ENCODE measurements at regions of chr4 and their contacts with region 1.

Region 1: DNA sequence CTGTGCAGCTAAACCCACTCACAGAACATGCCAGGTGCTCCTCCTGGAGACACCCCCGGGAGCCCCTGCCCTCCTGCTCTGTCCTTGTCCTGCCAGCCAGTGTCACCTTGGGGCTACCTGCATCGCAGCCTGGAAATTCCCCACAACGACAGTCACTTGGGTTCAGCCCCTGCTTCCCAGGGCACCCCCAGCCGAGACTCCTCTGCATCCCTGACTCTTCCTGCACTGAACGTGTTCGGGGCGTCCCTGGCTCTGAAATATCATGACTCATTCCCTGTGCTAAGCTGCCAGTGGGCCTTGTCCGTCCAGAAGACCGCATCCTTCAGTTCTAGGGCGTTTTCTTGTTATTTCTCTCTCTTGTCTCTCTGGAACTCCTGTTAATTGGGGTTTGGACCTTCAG is 5.8 kb downstream of the CFAP99 start:
- DNase-seq: peak; percentile 53
- ATAC-seq: no peak
- H3K4me3 ChIP-seq: no peak overlapping the region
- H3K27ac ChIP-seq: no peak overlapping the region
- H3K4me1 ChIP-seq: no peaks in the 10 kb centered on the region
- H3K27me3 ChIP-seq: peaks cover 19% of the 10 kb centered on the region
- CTCF ChIP-seq: no peak

Region 2: DNA sequence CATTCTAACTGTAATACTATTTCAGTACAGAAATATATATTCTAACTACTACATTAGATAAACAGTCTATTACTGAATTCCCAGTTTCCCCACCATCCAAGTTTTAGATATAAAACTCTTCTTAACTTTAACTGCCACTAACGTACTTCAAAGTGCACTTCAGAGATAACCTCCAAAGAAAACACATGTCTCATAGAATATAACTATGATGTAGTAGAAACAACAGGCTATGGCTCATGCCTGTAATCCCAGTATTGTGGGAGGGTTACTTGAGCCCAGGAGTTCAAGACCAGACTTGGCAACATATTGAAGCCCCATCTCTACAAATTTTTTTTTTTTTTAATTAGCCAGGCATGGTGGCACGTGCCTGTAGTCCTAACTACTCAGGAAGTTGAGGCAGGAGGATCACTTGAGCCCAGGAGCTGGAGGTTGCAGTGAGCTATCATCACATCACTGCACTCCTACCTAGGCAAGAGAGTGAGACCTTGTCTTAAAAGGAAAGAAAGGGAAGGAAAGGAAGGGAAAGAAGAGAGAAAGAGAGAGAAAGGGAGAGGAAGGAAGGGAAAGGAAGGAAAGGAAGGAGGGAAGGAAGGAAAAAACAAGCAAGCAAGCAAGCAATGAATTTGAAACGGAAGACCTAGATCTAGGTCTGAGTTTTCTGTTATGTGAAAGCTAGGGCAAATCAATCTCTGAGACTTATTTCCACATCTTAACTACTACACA is 187.5 kb before region 1 on chr4:
- intact Hi-C with region 1: loop called (anchors 10 kb)
- DNase-seq: no peak
- ATAC-seq: no peak
- H3K4me3 ChIP-seq: no peak overlapping the region
- H3K27ac ChIP-seq: no peak overlapping the region
- H3K4me1 ChIP-seq: peaks cover 32% of the 10 kb centered on the region
- H3K27me3 ChIP-seq: no peaks in the 10 kb centered on the region
- CTCF ChIP-seq: no peak

Measured in upper lobe of right lung (tissue), 1 donor.